MCF 10A (cell line): ENCODE measurements at regions of chr2 and their contacts with region 1.

Region 1: DNA sequence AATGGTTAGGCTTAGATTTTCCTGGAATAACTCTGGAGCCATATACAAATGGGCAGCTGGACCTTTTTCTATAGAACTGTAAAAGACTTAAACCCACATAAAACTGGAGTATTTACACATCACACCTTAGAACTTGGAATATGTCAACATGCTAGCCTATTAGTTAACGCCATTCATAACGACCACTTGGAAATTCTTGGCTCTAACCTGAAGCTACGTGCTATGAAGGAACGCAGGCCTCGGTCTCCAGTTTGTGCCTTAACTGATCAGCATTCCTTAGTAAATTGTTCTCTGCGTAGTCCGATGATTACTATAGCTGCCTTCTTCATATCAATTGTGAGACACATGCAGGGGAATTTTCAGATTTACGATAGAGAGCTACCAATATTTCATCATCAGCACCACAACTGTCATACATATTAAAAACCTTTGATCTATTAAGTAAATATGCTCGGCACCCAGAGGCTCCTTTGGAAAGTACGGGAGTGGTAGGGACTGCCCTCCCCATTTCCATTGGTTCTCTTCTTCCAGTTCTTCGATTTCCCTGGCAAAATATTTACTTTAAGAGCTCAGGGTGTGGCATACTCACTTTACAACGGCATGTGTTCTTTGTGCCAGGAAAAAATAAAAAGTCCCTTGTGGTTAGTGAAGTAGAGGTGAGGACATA is 17.5 kb upstream of the CCL20 start:
- DNase-seq: peak; percentile 78
- H3K4me3 Mint-ChIP-seq: peak overlapping the region; percentile 28
- H3K27ac Mint-ChIP-seq: peak overlapping the region; percentile 64
- H3K4me1 Mint-ChIP-seq: peaks cover 8% of the 10 kb centered on the region
- H3K27me3 Mint-ChIP-seq: no peaks in the 10 kb centered on the region
- CTCF ChIP-seq: no peak

Region 2: DNA sequence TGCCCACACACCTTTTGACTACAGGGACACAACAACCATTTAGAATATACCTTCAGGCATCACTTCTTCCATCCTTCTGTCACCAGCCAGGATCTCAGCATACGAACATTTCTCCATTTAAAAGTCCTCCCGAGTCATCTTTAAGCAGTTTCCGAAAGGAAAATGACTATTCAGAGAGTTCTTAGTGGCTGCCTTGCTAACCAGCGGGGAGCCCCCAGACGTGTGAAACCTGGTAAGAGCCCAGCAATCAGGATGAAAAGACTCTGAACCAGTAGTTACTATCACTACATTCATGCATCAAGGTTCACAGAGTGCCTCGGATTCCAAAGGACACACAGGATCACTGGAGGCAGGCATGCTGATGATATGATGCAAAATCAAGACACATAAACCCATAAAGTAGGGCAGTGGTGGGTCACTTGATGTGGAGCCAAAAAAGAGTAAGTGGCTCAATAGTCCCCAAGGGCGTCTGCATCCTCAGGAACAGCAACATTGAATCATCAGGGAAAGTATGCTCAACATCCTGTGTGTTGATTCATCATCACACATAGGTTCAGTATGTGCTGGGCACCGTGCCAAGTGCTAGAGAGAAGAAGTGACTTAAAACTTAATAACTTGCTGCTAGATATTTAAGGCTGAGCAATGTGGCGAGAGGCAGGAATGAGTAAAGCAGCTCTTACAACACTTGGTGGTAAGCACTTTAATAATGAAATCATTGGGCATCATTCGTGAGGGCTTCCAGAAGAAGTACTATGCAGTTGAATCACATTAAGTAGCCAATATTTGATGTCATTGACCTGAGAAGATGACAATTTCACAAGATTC is 21.9 kb after region 1 on chr2:
- CTCF ChIA-PET with region 1: interaction called, 6 read pairs
- POLR2A ChIA-PET with region 1: interaction called, 18 read pairs
- intact Hi-C with region 1: no loop called
- DNase-seq: peak; percentile 100
- H3K4me3 Mint-ChIP-seq: peak overlapping the region; percentile 80
- H3K27ac Mint-ChIP-seq: peak overlapping the region; percentile 92
- H3K4me1 Mint-ChIP-seq: peaks cover 46% of the 10 kb centered on the region
- H3K27me3 Mint-ChIP-seq: no peaks in the 10 kb centered on the region
- CTCF ChIP-seq: no peak